Ascending aorta (tissue), 2 donors: ENCODE measurements at regions of chr16 and their contacts with region 1.

Region 1: GRCh38 chr16:1019231-1020090 is 37.9 kb downstream of the SOX8 start:
- DNase-seq: peak in 1 of 2 donors; percentile 78
- H3K4me3 ChIP-seq: peak overlapping the region in 1 of 2 donors; percentile 45
- H3K27ac ChIP-seq: peak overlapping the region; percentile 61 to 67
- H3K4me1 ChIP-seq: peaks cover 0 to 10% of the 10 kb centered on the region in 2 donors
- H3K27me3 ChIP-seq: no peaks in the 10 kb centered on the region
- CTCF ChIP-seq: no peak

Region 2: DNA sequence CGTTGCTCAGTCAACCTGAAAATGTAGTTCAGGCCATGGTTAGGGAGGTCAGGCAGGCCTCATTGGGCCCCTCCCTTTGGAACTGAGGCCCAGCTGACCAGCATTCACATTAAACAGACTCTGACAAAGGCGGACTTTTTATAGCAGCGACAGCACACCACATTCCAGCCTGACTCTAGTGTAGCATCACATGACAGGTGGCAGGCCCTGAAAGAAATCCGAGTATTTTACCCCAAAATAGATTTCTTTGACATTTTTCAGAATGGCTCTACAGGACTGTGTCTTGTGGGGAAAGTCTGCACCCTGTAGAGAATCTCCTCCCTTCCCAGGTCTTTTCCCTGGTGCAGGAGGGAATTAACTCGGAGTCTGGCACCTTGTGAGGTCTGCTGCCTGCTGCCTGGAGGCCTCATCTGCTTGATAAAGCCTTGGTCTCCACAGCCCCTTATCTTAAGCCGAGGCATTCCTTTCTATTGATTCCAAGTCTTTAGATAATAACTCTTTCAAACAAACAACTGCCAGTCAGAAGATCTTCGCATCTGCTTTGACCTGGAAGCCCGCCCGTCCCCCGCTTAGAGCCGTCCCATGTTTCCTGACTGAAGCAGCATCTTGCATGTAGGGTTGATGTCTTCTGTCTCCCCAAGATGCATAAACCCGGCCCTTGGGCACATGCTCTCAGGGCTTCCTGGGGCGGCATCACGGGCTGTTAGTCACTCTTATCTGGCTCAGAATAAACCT is 536.0 kb before region 1 on chr16:
- intact Hi-C with region 1: no loop called
- DNase-seq: no peak
- H3K4me3 ChIP-seq: no peak overlapping the region
- H3K27ac ChIP-seq: no peak overlapping the region
- H3K4me1 ChIP-seq: no peaks in the 10 kb centered on the region
- H3K27me3 ChIP-seq: no peaks in the 10 kb centered on the region
- CTCF ChIP-seq: no peak

Region 3: DNA sequence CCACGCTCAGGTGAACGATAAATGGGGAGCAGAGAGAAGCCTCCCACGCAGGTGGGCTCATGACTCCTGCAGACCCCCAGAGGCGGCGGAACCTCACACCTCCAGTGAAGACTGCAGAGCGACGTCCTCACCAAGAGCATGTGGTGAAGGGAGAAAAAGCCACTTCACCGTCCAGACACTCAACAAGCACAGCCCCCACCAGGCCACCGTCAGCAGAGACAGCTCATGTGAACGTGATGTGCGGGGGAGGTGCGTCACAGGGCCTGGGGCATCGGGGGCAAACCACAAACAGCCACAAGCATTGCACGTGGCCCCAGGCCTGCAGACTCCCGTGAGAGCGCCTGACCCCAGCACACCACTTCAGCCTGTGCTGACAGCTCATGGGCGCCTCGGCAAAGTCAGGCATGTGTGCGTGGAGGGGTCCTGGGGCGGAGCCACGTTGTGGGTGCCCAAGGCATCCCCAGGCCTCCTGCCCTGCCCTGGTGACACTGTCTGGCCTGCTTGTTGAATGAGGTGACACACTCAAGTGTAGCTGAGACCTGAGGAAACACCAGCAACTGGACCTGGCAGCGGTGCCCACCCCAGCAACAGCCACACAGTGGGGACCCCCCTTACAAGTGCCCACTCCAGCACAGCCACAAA is 67.7 kb before region 1 on chr16:
- intact Hi-C with region 1: no loop called
- DNase-seq: no peak
- H3K4me3 ChIP-seq: no peak overlapping the region
- H3K27ac ChIP-seq: no peak overlapping the region
- H3K4me1 ChIP-seq: no peaks in the 10 kb centered on the region
- H3K27me3 ChIP-seq: no peaks in the 10 kb centered on the region
- CTCF ChIP-seq: no peak

Region 4: GRCh38 chr16:988471-989353 is 30.7 kb before region 1 on chr16:
- intact Hi-C with region 1: loop called (anchors 2 kb)
- DNase-seq: no peak
- H3K4me3 ChIP-seq: peak overlapping the region in 1 of 2 donors; percentile 34
- H3K27ac ChIP-seq: peak overlapping the region; percentile 49 to 80
- H3K4me1 ChIP-seq: peaks cover 14% of the 10 kb centered on the region in 2 donors
- H3K27me3 ChIP-seq: no peaks in the 10 kb centered on the region
- CTCF ChIP-seq: no peak